ENCODE measurements at regions of chr1 and their contacts with region 1.

Region 1: DNA sequence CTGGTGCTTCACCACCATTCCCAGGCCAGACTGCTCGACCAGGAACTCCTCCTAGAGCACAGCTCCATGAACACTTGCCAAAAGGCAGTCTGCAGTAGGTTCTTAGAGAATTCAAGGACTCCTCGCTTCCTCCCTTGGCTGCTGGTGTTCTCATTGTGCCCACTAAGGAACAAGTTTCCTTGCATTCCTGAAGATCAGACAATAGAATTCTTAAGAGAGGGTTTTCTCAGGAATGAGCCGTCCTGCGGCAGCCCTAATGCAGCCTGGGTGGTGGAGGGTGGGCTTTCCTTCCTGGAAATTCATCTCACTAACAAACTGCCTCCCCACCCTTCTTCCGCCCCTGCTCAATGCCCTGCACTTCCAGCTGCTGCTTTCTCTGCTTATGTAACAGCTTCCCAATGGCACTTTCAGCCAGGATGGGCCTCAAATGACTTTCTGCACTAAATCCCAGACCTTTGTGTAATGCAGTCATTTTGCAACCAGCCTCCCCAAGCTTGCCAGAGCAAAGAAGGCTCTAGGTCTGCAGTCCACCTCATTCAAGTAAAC is 287.9 kb downstream of the PLPP3 start:
- DNase-seq: peak in 4 of 5 donors; percentile 33 to 74 (median 58)
- ATAC-seq: peak; percentile 29 to 90 (median 86)
- H3K4me3 ChIP-seq: no peak overlapping the region
- H3K27ac ChIP-seq: peak overlapping the region in 9 of 12 donors; percentile 28 to 69 (median 47)
- H3K4me1 ChIP-seq: peaks cover 0 to 24% (median 5%) of the 10 kb centered on the region in 12 donors
- H3K27me3 ChIP-seq: no peaks in the 10 kb centered on the region
- CTCF ChIP-seq: no peak
- POLR2A ChIP-seq: no peak

Region 2: DNA sequence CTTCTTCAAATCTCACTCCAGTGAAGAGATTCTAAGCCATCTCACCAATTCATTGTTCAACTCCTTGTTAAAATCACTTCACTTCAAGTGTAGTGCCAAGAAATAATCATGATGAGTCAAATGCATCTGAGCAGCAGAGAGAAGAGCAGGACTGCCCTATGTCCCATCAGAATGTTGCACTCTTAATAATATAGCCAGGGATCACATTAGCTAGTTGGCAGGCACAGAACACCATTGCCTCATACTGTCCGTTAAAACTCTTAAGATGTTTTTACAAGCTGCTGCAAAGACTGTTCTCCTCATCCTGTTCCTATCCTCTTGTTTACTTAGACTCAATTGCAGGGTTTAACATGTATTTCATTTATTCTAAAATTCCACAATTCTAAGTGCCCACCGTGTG is 145.0 kb before region 1 on chr1:
- intact Hi-C with region 1: loop called in 1 of 10 experiments (anchors 5 kb)
- DNase-seq: no peak
- ATAC-seq: peak in 3 of 4 donors; percentile 42 to 63 (median 42)
- H3K4me3 ChIP-seq: no peak overlapping the region
- H3K27ac ChIP-seq: peak overlapping the region in 2 of 12 donors; percentile 22 to 46
- H3K4me1 ChIP-seq: peaks cover 0 to 32% (median 4%) of the 10 kb centered on the region in 12 donors
- H3K27me3 ChIP-seq: no peaks in the 10 kb centered on the region
- CTCF ChIP-seq: no peak
- POLR2A ChIP-seq: no peak